ENCODE measurements at regions of chr10 and their contacts with region 1.

Region 1: DNA sequence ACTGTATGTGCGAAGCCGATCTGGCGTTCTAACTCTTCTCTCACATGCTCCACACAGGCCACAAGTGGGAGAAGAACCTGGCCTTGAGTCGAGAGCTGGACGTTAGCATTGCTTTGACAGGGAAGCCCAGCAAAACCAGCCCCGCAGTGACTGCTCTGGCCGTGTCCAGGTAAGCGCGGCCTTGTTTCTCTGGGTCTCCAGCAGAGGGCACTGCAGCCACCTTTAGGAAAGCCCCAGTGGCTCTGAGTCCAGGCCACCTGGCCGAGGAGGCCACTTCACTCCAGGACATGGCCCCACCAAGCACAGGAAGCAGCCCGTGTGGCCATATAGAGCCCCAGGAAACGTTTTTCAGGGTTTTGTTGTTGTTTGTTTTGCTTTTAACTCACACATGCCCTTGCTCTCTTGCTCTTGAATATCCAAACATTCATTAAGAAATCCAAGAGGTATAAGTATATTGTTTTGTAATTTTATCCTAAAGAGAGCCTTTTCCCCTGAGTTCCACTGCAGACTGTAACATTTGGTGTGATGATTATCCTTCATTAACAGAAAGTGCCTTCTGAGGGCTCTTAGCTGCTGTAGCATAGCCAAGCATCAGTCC is 41.8 kb upstream of the LRRC18 start:
- DNase-seq: peak; percentile 74
- H3K4me3 ChIP-seq: no peak overlapping the region
- H3K27ac ChIP-seq: no peak overlapping the region
- H3K4me1 ChIP-seq: peaks cover 11% of the 10 kb centered on the region
- CTCF ChIP-seq: peak; percentile 96

Region 2: GRCh38 chr10:49164559-49165188 is 183.3 kb after region 1 on chr10:
- CTCF ChIA-PET with region 1: interaction called, 3 read pairs
- POLR2A ChIA-PET with region 1: no interaction called
- intact Hi-C with region 1: loop called (anchors 1 kb)
- DNase-seq: peak; percentile 92
- H3K4me3 ChIP-seq: no peak overlapping the region
- H3K27ac ChIP-seq: no peak overlapping the region
- H3K4me1 ChIP-seq: peaks cover 15% of the 10 kb centered on the region
- CTCF ChIP-seq: peak; percentile 98

Region 3: DNA sequence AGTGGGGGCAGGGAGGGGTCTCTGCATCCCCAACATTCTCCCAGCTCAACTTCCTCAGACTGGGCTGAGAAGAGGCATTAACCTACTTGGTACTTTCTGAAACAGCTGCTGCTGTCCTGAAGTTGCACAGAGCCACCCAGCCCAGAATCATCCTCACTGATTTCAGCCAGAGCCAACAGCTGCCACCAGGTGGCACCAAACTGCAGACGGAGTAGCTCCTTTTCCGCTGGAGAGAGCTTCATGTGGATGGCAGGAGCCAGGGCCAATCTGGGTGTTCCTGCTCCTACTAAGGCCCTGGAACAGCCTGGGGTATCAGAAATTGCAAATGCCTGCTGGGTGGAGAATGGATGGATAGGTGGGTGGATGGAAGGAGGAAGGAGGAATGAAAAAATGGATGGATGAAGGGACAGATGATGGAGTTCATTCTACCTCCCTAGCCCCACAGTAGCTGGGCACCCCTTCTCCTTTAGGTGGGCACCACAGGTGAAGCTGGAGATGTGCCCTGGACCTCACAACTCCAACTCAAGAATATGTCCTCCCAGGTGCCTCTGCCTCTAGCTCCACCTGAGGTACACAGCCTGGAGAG is 426.2 kb after region 1 on chr10:
- CTCF ChIA-PET with region 1: no interaction called
- POLR2A ChIA-PET with region 1: no interaction called
- intact Hi-C with region 1: loop called (anchors 5 kb)
- DNase-seq: peak; percentile 70
- H3K4me3 ChIP-seq: no peak overlapping the region
- H3K27ac ChIP-seq: no peak overlapping the region
- H3K4me1 ChIP-seq: no peaks in the 10 kb centered on the region
- CTCF ChIP-seq: peak; percentile 92

Region 4: GRCh38 chr10:49512121-49512809 is 530.9 kb after region 1 on chr10:
- CTCF ChIA-PET with region 1: no interaction called
- POLR2A ChIA-PET with region 1: no interaction called
- intact Hi-C with region 1: loop called (anchors 5 kb)
- DNase-seq: peak; percentile 56
- H3K4me3 ChIP-seq: no peak overlapping the region
- H3K27ac ChIP-seq: no peak overlapping the region
- H3K4me1 ChIP-seq: no peaks in the 10 kb centered on the region
- CTCF ChIP-seq: peak; percentile 88